ENCODE measurements at regions of chr6 and their contacts with region 1.

Region 1: DNA sequence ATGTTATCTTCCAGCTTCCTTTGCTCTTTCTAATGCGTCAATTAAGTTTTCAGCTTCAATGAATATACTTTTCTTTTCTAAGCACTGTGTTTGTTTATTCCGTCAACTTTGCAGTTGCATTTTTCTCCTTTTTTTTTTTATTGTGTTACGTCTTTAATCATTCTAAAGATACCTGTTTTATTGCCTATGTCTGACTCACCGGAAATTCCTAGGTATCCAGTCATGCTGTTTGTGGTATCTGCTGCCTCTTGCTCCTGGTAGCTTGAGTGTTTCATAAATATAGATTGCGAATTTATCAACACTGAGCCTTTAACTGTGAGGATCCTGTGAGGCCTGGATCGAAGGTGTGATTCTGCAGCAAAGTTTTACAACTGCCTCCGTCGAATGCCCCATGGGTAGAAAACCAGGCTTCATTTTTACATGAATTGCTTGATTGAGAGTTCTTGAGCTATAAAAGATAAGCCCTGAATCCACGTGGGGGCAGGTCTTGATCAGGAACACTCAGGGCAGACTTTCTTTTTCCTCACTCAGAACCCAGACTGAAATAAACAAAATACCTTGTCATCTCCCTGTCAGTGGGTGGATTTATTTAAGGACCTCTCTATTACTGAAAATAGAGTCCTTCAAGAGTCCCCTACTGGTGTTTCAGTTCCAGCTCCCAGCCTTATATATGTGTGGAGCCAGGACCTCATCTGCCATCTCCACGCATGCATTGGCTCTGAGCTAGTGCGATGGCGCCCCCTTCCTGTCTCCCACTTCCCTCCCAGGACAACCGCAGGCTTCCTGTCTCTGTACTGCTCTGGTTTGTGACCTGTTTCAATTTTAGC is 60.1 kb upstream of the LRRC1 start:
- DNase-seq: peak; percentile 51
- ATAC-seq: peak; percentile 77

Region 2: DNA sequence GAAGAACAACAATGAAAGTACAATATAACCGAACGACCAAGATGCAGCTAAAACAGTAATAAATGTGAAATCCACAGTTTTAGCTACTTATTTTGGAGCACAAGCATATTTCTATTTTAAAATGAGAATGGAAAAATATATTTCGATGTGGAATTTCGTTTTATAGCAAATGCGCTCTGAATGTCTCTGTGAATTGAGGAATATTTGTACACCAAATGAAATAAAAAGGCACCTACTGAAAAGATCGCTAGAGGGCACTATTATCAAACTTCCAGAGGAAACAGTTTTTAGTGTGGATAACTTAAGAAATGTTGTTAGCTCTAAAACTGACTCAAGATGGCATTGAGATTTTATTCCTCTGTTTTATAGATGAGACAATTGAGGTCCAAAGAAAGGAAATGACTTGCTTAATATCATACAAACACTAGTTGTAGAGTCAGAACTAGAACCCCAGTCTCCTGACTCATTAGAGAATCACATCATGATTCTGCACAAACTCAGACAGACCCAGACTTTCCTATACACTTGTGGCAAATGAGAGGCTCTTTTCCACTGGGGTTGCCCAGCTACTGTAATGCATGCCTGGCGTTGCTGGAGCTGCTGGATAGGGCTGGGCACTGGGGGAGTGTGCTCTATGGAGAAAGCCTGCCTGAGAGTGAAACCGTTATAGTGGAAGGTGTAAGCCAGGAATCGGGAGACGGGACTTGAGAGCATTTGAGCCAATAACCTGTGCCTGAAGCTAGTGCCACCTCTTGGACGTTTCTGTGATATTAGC is 241.6 kb before region 1 on chr6:
- intact Hi-C with region 1: loop called (anchors 5 kb)
- DNase-seq: no peak
- ATAC-seq: peak; percentile 84

Region 3: GRCh38 chr6:53862662-53863462 is 128.2 kb after region 1 on chr6:
- intact Hi-C with region 1: no loop called
- DNase-seq: no peak
- ATAC-seq: peak; percentile 39

Measured in left ventricle myocardium superior (tissue), 1 donor.